Caco-2 (cell line): ENCODE measurements at regions of chr11 and their contacts with region 1.

Region 1: DNA sequence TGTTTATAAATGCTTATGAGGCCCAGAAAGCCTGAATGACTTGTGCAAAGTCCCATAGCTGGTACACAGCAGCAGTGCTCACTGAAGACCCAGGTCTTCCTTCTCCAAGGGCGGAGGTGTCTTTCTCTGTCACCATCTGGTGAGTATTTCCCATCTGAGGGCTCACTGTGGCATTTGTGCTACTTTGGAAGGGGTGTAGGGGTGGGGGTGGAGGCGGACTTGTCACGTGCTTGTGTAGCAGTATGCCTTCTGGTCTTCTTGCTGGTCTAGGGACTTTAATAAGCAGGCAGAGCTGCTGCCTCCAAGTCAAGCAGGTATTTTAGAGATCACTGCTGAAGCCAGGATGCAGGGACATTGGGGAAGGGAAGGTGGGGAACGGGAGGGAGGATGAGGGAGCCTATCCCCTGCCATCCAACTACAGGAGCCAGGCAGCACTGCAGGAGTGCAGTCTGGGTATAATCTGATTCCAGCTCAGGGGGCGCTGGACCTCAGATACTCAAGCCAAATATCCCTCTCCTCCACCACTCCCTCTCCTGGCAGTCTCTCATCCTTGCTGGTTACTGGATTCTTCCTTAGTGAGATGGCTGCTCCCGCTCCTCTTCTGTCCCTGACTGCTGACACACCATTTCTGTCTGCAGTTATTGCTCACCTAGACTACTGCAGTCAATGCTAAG is 3.4 kb downstream of the ABCC8 start:
- DNase-seq: peak; percentile 70 to 77
- H3K4me3 ChIP-seq: no peak overlapping the region
- H3K4me3 Mint-ChIP-seq: no peak overlapping the region
- H3K27ac Mint-ChIP-seq: no peak overlapping the region
- H3K4me1 ChIP-seq: 0 out of 2 replicates have a peak, but pooled peaks cover 3% of the 10 kb centered on the region
- H3K4me1 Mint-ChIP-seq: no peaks in the 10 kb centered on the region
- H3K27me3 ChIP-seq: peaks cover 8% of the 10 kb centered on the region
- H3K27me3 Mint-ChIP-seq: peaks cover 26% of the 10 kb centered on the region
- CTCF ChIP-seq: peak; percentile 78 to 96

Region 2: DNA sequence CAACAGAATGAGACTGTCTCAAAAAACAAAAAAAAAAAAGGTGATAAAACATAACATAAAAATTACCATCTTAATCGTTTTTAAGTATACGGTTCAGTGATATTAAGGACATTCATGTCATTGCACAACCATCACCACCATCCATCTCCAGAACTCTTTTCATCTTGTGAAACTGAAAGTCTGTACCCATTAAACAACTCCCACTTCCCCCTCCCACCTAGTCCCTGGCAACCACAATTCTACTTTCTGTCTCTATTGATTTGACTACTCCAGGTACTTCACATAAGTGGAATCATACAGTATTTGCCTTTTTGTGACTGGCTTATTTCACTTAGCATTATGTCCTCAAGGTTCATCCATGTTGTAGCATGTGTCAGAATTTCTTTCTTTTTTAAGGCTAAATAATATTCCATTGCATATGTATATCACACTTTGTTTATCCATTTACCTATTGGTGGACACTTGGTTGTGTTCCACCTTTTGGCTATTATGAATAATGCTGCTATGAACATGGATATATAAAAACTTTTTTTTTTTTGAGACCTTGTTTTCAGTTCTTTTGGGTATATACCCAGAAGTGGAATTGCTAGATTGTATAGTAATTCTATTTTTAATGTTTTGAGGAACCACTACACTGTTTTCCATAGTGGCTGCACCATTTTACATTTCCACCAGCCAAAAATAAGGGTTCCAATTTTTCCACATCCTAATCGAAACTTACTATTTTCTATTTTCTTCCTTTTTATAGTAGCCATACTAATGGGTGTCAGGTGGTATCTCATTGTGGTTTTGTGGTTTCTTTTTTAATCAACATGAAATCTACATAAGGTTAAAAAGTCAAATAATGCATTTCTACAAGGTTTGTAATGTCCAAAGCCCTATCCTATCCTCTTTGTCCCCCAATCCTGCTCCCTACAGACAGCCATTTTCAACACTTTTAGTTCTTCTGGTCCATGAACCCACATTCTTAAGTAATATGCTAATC is 242.0 kb before region 1 on chr11:
- CTCF ChIA-PET with region 1: no interaction called
- POLR2A ChIA-PET with region 1: no interaction called
- intact Hi-C with region 1: loop called (anchors 1 kb)
- DNase-seq: no peak
- H3K4me3 ChIP-seq: no peak overlapping the region
- H3K4me3 Mint-ChIP-seq: no peak overlapping the region
- H3K27ac Mint-ChIP-seq: no peak overlapping the region
- H3K4me1 ChIP-seq: no peaks in the 10 kb centered on the region
- H3K4me1 Mint-ChIP-seq: peaks cover 6% of the 10 kb centered on the region
- H3K27me3 ChIP-seq: no peaks in the 10 kb centered on the region
- H3K27me3 Mint-ChIP-seq: no peaks in the 10 kb centered on the region
- CTCF ChIP-seq: no peak

Region 3: DNA sequence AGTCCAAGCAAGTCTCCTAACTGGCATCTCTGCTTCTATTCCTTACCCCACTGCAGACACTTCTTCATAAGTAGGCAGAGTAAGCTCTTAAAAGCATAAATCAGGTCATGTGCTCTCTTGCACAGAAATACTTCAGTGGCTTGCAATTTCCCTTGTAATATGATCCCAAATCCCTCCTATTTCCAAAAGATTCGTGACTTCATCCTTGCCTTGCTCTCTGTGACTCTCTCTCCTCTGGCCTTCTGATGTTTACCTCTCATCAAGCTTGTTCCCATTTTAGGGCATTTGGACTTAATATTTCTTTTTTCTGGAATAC is 159.0 kb before region 1 on chr11:
- CTCF ChIA-PET with region 1: no interaction called
- POLR2A ChIA-PET with region 1: no interaction called
- intact Hi-C with region 1: no loop called
- DNase-seq: no peak
- H3K4me3 ChIP-seq: no peak overlapping the region
- H3K4me3 Mint-ChIP-seq: no peak overlapping the region
- H3K27ac Mint-ChIP-seq: no peak overlapping the region
- H3K4me1 ChIP-seq: no peaks in the 10 kb centered on the region
- H3K4me1 Mint-ChIP-seq: no peaks in the 10 kb centered on the region
- H3K27me3 ChIP-seq: no peaks in the 10 kb centered on the region
- H3K27me3 Mint-ChIP-seq: no peaks in the 10 kb centered on the region
- CTCF ChIP-seq: no peak

Region 4: GRCh38 chr11:17412488-17413180 is 60.6 kb before region 1 on chr11:
- CTCF ChIA-PET with region 1: interaction called, 7 read pairs
- POLR2A ChIA-PET with region 1: no interaction called
- intact Hi-C with region 1: loop called (anchors 1 kb)
- DNase-seq: peak in 1 of 2 experiments; percentile 14
- H3K4me3 ChIP-seq: no peak overlapping the region
- H3K4me3 Mint-ChIP-seq: no peak overlapping the region
- H3K27ac Mint-ChIP-seq: no peak overlapping the region
- H3K4me1 ChIP-seq: no peaks in the 10 kb centered on the region
- H3K4me1 Mint-ChIP-seq: no peaks in the 10 kb centered on the region
- H3K27me3 ChIP-seq: no peaks in the 10 kb centered on the region
- H3K27me3 Mint-ChIP-seq: peaks cover 19% of the 10 kb centered on the region
- CTCF ChIP-seq: peak in 1 of 2 experiments; percentile 4

Region 5: GRCh38 chr11:17458268-17458667 is 14.9 kb before region 1 on chr11:
- CTCF ChIA-PET with region 1: no interaction called
- POLR2A ChIA-PET with region 1: no interaction called
- intact Hi-C with region 1: no loop called
- DNase-seq: no peak
- H3K4me3 ChIP-seq: no peak overlapping the region
- H3K4me3 Mint-ChIP-seq: no peak overlapping the region
- H3K27ac Mint-ChIP-seq: no peak overlapping the region
- H3K4me1 ChIP-seq: no peaks in the 10 kb centered on the region
- H3K4me1 Mint-ChIP-seq: no peaks in the 10 kb centered on the region
- H3K27me3 ChIP-seq: peaks cover 2% of the 10 kb centered on the region
- H3K27me3 Mint-ChIP-seq: peaks cover 15% of the 10 kb centered on the region
- CTCF ChIP-seq: no peak